Activated B cell treated with CpG ODN at 0.5 μM for 24 hours (primary cell): ENCODE measurements at regions of chr7 and their contacts with region 1.

Region 1: GRCh38 chr7:151838861-151839391 is 38.0 kb downstream of the PRKAG2 start:
- DNase-seq: peak; percentile 49
- ATAC-seq: peak; percentile 80
- H3K4me3 Mint-ChIP-seq: peak overlapping the region; percentile 81
- H3K27ac Mint-ChIP-seq: peak overlapping the region; percentile 90
- H3K4me1 Mint-ChIP-seq: peaks cover 39% of the 10 kb centered on the region
- H3K27me3 Mint-ChIP-seq: no peaks in the 10 kb centered on the region
- CTCF ChIP-seq: no peak

Region 2: DNA sequence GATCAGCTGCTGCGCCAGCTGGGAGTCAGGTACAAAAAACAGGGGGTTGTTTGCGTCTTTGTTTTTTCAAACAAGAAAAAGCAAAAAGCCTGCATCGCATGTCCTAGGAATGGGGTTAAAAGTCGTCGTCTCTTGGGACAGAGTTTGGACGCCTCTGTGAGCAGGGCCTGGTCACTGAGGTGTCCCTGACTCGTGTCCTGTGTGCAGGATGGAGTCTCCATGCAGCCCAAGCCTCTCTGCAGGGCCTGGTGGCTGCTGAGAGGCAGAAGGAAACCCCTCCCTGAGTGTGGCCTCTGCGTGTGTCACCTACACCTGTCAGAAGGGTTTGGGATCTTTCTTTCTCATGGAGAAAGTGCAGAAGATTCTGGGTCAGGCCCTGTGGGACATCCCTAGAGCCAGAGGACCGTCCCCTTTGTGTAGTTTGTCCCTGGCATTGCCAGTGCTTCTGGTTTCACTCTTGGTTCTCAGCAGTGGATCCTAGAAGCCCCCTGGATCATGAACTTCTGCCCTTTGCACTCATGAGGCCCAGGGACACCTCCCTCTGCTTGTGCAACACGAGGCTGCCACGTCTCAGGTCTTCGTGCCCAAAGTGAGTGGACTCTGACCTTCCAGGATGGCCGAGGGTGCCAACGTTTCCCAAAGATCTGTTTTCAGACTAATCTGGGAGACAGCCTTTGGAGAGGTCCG is 37.0 kb before region 1 on chr7:
- CTCF ChIA-PET with region 1: no interaction called
- POLR2A ChIA-PET with region 1: interaction called, 8 read pairs
- intact Hi-C with region 1: loop called (anchors 5 kb)
- DNase-seq: no peak
- ATAC-seq: no peak
- H3K4me3 Mint-ChIP-seq: no peak overlapping the region
- H3K27ac Mint-ChIP-seq: no peak overlapping the region
- H3K4me1 Mint-ChIP-seq: peaks cover 18% of the 10 kb centered on the region
- H3K27me3 Mint-ChIP-seq: no peaks in the 10 kb centered on the region
- CTCF ChIP-seq: no peak

Region 3: GRCh38 chr7:151851145-151851751 is 12.3 kb after region 1 on chr7:
- CTCF ChIA-PET with region 1: interaction called, 3 read pairs
- POLR2A ChIA-PET with region 1: interaction called, 26 read pairs
- intact Hi-C with region 1: loop called (anchors 1 kb)
- DNase-seq: peak; percentile 42
- ATAC-seq: peak; percentile 79
- H3K4me3 Mint-ChIP-seq: peak overlapping the region; percentile 81
- H3K27ac Mint-ChIP-seq: peak overlapping the region; percentile 85
- H3K4me1 Mint-ChIP-seq: peaks cover 32% of the 10 kb centered on the region
- H3K27me3 Mint-ChIP-seq: no peaks in the 10 kb centered on the region
- CTCF ChIP-seq: no peak

Region 4: GRCh38 chr7:151936207-151936606 is 97.3 kb after region 1 on chr7:
- CTCF ChIA-PET with region 1: no interaction called
- POLR2A ChIA-PET with region 1: no interaction called
- intact Hi-C with region 1: loop called (anchors 1 kb)
- DNase-seq: no peak
- ATAC-seq: peak; percentile 78
- H3K4me3 Mint-ChIP-seq: peak overlapping the region; percentile 77
- H3K27ac Mint-ChIP-seq: peak overlapping the region; percentile 94
- H3K4me1 Mint-ChIP-seq: peaks cover 45% of the 10 kb centered on the region
- H3K27me3 Mint-ChIP-seq: peaks cover 3% of the 10 kb centered on the region
- CTCF ChIP-seq: no peak

Region 5: GRCh38 chr7:151978616-151979015 is 139.7 kb after region 1 on chr7:
- CTCF ChIA-PET with region 1: no interaction called
- POLR2A ChIA-PET with region 1: no interaction called
- intact Hi-C with region 1: no loop called
- DNase-seq: no peak
- ATAC-seq: no peak
- H3K4me3 Mint-ChIP-seq: no peak overlapping the region
- H3K27ac Mint-ChIP-seq: no peak overlapping the region
- H3K4me1 Mint-ChIP-seq: no peaks in the 10 kb centered on the region
- H3K27me3 Mint-ChIP-seq: peaks cover 12% of the 10 kb centered on the region
- CTCF ChIP-seq: no peak